Naive thymus-derived CD4-positive, alpha-beta T cell (primary cell): ENCODE measurements at regions of chr4 and their contacts with region 1.

Region 1: DNA sequence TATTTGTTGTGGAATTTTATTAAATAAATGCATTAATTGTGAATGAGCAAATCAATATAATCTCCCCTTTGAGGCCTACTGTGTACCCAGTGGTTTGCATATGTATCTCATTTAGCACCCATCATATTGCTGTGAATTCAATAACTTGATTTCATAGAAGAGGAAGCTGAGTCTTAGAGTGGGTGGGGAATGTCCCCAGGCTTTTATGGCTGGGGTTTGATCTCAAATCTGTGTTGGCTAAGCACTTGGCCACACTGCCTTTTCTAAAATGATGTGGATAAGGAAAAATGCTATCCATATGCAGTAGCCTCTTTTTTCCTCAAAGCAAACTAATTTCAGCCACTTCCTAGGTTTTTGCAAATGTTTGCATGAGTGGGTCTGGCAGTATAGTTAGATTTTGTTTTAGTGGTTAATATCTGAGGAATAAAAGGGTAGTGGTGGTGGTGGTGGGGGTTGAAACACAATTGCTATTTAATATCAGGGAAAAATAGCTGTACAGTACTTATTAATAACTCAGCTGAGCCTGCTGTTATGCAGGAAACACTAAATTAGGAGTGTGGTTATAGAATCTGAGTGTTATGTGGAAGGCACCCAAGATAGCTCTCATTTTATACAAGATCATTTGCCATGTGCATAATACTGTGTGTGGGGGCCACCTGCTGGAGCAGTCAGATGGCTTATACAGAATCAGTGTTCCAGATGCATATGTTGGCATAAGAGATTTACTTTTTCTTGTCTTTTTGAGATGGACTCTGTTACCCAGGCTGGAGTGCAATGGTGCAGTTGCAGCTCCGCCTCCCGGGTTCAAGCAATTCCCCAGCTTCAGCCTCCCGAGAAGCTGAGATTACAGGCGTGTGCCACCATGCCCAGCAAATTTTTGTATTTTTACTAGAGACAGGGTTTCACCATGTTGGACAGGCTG is 108.0 kb downstream of the TMEM131L start:
- DNase-seq: peak; percentile 12 to 77 (median 69)
- ATAC-seq: peak; percentile 94
- H3K4me3 ChIP-seq: no peak overlapping the region
- H3K4me3 Mint-ChIP-seq: peak overlapping the region; percentile 7 to 61 (median 42)
- H3K27ac ChIP-seq: peak overlapping the region; percentile 11
- H3K27ac Mint-ChIP-seq: peak overlapping the region; percentile 30 to 85 (median 83)
- H3K4me1 ChIP-seq: peaks cover 12 to 36% of the 10 kb centered on the region in 2 donors
- H3K4me1 Mint-ChIP-seq: peaks cover 46 to 84% (median 74%) of the 10 kb centered on the region in 7 donors
- H3K27me3 ChIP-seq: no peaks in the 10 kb centered on the region
- H3K27me3 Mint-ChIP-seq: no peaks in the 10 kb centered on the region

Region 2: GRCh38 chr4:153142700-153143438 is 431.3 kb before region 1 on chr4:
- CTCF ChIA-PET with region 1: interaction called, 4 read pairs
- POLR2A ChIA-PET with region 1: no interaction called
- intact Hi-C with region 1: loop called (anchors 1 to 2 kb)
- DNase-seq: peak in 8 of 9 donors; percentile 39 to 71 (median 58)
- ATAC-seq: peak; percentile 76
- H3K4me3 ChIP-seq: no peak overlapping the region
- H3K4me3 Mint-ChIP-seq: no peak overlapping the region
- H3K27ac ChIP-seq: no peak overlapping the region
- H3K27ac Mint-ChIP-seq: no peak overlapping the region
- H3K4me1 ChIP-seq: no peaks in the 10 kb centered on the region
- H3K4me1 Mint-ChIP-seq: peaks cover 0 to 4% (median 0%) of the 10 kb centered on the region in 7 donors
- H3K27me3 ChIP-seq: no peaks in the 10 kb centered on the region
- H3K27me3 Mint-ChIP-seq: peaks cover 0 to 14% (median 0%) of the 10 kb centered on the region in 5 donors

Region 3: DNA sequence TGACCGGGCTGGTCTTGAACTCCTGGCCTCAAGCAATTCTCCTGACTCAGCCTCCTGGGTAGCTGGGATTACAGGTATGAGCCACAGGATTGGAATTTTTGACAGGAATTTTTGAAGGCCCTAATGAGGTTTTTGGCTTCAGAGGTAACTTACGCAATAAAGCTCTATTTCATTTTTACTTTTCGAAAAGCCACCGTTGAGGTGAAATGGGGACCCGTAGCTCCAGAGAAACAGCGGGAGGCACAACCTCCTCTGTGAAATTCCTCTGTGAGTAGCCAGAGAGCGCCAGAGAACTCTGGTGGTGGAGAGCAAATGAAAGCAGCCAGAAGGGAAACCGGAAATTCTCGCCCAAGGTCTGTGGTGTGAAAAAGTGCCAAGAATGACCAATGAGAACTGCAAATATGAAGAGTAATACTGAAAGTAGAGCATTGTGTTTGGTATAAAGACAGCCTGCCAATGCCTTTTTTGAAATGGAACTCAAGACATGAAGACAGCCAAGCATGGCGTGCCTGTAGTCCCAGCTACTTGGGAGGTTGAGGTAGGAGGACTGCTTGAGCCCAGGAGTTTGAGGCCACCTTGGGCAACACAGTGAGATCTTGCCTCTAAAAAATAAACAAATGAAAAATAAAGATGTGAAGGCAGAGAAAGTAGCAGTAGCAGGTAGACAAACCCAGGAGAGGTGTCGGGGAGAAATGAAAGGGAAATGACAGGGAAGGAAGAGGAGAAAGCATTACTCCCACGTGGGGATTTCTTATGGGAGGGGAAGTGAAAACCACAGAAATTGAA is 141.0 kb before region 1 on chr4:
- CTCF ChIA-PET with region 1: interaction called, 58 read pairs
- POLR2A ChIA-PET with region 1: interaction called, 17 read pairs
- intact Hi-C with region 1: loop called (anchors 1 kb)
- DNase-seq: peak; percentile 22 to 72 (median 59)
- ATAC-seq: peak; percentile 90
- H3K4me3 ChIP-seq: peak overlapping the region; percentile 65
- H3K4me3 Mint-ChIP-seq: peak overlapping the region; percentile 78 to 98 (median 87)
- H3K27ac ChIP-seq: peak overlapping the region; percentile 66
- H3K27ac Mint-ChIP-seq: peak overlapping the region; percentile 88 to 98 (median 96)
- H3K4me1 ChIP-seq: peaks cover 13 to 54% of the 10 kb centered on the region in 2 donors
- H3K4me1 Mint-ChIP-seq: peaks cover 31 to 83% (median 72%) of the 10 kb centered on the region in 7 donors
- H3K27me3 ChIP-seq: no peaks in the 10 kb centered on the region
- H3K27me3 Mint-ChIP-seq: no peaks in the 10 kb centered on the region

Region 4: GRCh38 chr4:153488006-153488891 is 85.9 kb before region 1 on chr4:
- CTCF ChIA-PET with region 1: interaction called, 15 read pairs
- POLR2A ChIA-PET with region 1: interaction called, 10 read pairs
- intact Hi-C with region 1: loop called (anchors 1 kb)
- DNase-seq: peak; percentile 51 to 87 (median 79)
- ATAC-seq: peak; percentile 81
- H3K4me3 ChIP-seq: peak overlapping the region; percentile 59
- H3K4me3 Mint-ChIP-seq: peak overlapping the region; percentile 79 to 93 (median 84)
- H3K27ac ChIP-seq: peak overlapping the region; percentile 85
- H3K27ac Mint-ChIP-seq: peak overlapping the region; percentile 87 to 99 (median 95)
- H3K4me1 ChIP-seq: peaks cover 57 to 71% of the 10 kb centered on the region in 2 donors
- H3K4me1 Mint-ChIP-seq: peaks cover 68 to 91% (median 81%) of the 10 kb centered on the region in 7 donors
- H3K27me3 ChIP-seq: no peaks in the 10 kb centered on the region
- H3K27me3 Mint-ChIP-seq: no peaks in the 10 kb centered on the region

Region 5: DNA sequence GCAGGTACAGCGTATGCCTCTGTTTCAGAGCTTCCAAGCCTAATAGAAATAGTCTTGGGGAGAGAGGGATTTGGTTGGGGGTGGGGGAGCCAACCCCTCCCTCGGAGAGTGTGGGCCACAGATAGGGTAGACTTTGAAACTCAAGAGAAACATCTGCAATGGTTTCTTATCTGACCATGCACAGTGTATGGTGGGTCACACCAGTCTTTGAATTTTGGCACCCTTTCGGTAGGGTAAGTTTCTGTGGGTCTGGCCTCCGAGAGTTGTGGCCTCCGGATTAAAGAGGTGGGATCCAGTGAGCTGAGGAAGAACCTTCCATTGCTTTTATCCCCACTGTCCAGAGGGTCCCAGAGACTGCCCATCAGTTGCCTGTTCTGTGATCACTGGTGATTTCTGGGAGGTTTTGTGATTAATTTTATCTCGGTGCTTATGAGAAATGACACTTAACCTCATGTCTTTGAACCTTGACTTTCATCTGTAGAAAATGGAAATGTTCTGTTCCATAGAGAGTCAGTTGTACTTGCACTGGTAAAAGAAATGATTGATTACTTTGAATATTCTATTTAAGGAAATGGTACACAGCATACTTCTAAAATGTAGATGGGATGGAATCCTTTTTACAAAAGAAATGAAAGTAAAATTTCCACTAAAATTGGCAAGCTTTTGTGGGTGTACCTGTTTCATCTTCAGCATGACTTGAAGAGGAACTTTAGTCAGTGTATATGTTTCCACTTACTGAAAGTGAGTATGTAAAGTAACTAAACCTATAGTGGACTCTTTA is 45.2 kb before region 1 on chr4:
- CTCF ChIA-PET with region 1: interaction called, 4 read pairs
- POLR2A ChIA-PET with region 1: interaction called, 4 read pairs
- intact Hi-C with region 1: loop called (anchors 1 to 2 kb)
- DNase-seq: peak in 5 of 9 donors; percentile 21 to 32 (median 27)
- ATAC-seq: peak; percentile 18
- H3K4me3 ChIP-seq: peak overlapping the region; percentile 24
- H3K4me3 Mint-ChIP-seq: peak overlapping the region; percentile 62 to 89 (median 80)
- H3K27ac ChIP-seq: peak overlapping the region; percentile 68
- H3K27ac Mint-ChIP-seq: peak overlapping the region; percentile 86 to 96 (median 90)
- H3K4me1 ChIP-seq: peaks cover 71 to 94% of the 10 kb centered on the region in 2 donors
- H3K4me1 Mint-ChIP-seq: peaks cover 82 to 99% (median 96%) of the 10 kb centered on the region in 7 donors
- H3K27me3 ChIP-seq: no peaks in the 10 kb centered on the region
- H3K27me3 Mint-ChIP-seq: no peaks in the 10 kb centered on the region

Region 6: DNA sequence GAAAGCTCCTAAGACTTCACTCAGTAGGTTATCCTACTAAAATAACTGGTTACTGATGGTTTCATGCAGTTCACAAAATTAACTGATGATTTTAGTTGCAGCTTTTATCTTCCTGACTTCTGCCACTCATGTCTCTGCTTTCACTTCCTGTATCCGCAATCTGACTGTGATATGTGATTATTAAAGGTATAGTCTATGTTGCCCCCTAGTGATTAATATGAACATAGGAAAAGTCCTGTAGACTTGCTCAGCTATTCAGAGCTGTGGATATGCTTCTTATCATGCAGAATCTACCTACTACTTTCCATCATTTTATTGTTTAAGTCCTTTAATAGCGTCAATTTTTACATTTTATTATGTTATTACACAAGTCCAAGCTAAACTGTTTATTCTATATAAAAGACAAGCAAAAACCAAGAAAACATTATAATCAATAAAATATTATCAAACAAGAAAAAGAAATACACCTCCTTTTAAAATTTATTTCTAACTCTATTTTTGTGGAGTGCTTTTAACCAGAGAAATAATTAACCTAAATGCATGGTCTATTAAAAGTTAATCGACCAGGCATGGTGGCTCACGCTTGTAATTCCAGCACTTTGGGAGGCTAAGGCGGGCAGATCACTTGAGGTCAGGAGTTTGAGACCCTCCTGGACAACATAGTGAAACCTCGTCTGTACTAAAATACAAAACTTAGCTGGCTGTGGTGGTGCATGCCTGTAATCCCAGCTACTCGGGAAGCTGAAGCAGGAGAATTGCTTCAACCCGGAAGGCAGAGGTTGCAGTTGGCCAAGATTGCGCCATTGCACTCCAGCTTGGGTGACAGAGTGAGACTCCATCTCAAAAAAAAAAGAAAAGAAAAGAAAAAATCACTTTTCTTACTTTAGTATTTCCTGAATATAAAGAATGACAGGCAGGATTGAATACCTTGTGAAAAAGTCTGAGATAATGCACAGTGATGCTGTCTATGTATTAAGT is 69.6 kb after region 1 on chr4:
- CTCF ChIA-PET with region 1: interaction called, 6 read pairs
- POLR2A ChIA-PET with region 1: no interaction called
- intact Hi-C with region 1: loop called in 1 of 2 experiments (anchors 2 kb)
- DNase-seq: peak in 7 of 9 donors; percentile 25 to 73 (median 56)
- ATAC-seq: peak; percentile 91
- H3K4me3 ChIP-seq: no peak overlapping the region
- H3K4me3 Mint-ChIP-seq: peak overlapping the region in 6 of 10 donors; percentile 0 to 46 (median 22)
- H3K27ac ChIP-seq: no peak overlapping the region
- H3K27ac Mint-ChIP-seq: peak overlapping the region in 7 of 9 donors; percentile 0 to 69 (median 8)
- H3K4me1 ChIP-seq: no peaks in the 10 kb centered on the region
- H3K4me1 Mint-ChIP-seq: peaks cover 4 to 22% (median 18%) of the 10 kb centered on the region in 7 donors
- H3K27me3 ChIP-seq: no peaks in the 10 kb centered on the region
- H3K27me3 Mint-ChIP-seq: no peaks in the 10 kb centered on the region

Region 7: DNA sequence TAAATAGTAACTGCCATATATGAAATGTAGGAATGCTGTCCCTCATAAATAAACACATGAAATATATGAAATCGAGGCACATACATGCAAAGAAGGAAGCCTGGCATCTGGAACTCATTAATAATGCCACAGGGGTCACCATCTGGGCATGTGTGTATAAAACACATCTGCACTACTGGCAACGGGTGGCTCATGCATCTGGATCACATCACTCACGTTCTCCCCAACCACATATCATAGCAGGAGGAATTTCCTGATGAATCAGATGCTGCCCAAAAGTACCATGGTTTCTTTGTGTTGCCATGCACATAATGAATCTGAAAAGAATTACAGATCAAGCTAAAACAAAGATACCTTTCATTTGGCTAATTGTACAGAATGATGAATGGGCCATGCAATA is 157.1 kb after region 1 on chr4:
- CTCF ChIA-PET with region 1: no interaction called
- POLR2A ChIA-PET with region 1: no interaction called
- intact Hi-C with region 1: no loop called
- DNase-seq: no peak
- ATAC-seq: no peak
- H3K4me3 ChIP-seq: no peak overlapping the region
- H3K4me3 Mint-ChIP-seq: no peak overlapping the region
- H3K27ac ChIP-seq: no peak overlapping the region
- H3K27ac Mint-ChIP-seq: peak overlapping the region in 1 of 9 donors; percentile 11
- H3K4me1 ChIP-seq: no peaks in the 10 kb centered on the region
- H3K4me1 Mint-ChIP-seq: peaks cover 0 to 7% (median 0%) of the 10 kb centered on the region in 7 donors
- H3K27me3 ChIP-seq: no peaks in the 10 kb centered on the region
- H3K27me3 Mint-ChIP-seq: peaks cover 0 to 37% (median 0%) of the 10 kb centered on the region in 5 donors

Region 8: GRCh38 chr4:153997516-153997915 is 423.4 kb after region 1 on chr4:
- CTCF ChIA-PET with region 1: no interaction called
- POLR2A ChIA-PET with region 1: no interaction called
- intact Hi-C with region 1: no loop called
- DNase-seq: no peak
- ATAC-seq: no peak
- H3K4me3 ChIP-seq: no peak overlapping the region
- H3K4me3 Mint-ChIP-seq: no peak overlapping the region
- H3K27ac ChIP-seq: no peak overlapping the region
- H3K27ac Mint-ChIP-seq: no peak overlapping the region
- H3K4me1 ChIP-seq: no peaks in the 10 kb centered on the region
- H3K4me1 Mint-ChIP-seq: no peaks in the 10 kb centered on the region
- H3K27me3 ChIP-seq: no peaks in the 10 kb centered on the region
- H3K27me3 Mint-ChIP-seq: peaks cover 0 to 49% (median 18%) of the 10 kb centered on the region in 5 donors

Region 9: GRCh38 chr4:154478128-154478527 is 904.0 kb after region 1 on chr4:
- CTCF ChIA-PET with region 1: no interaction called
- POLR2A ChIA-PET with region 1: no interaction called
- intact Hi-C with region 1: no loop called
- DNase-seq: no peak
- ATAC-seq: no peak
- H3K4me3 ChIP-seq: no peak overlapping the region
- H3K4me3 Mint-ChIP-seq: no peak overlapping the region
- H3K27ac ChIP-seq: no peak overlapping the region
- H3K27ac Mint-ChIP-seq: no peak overlapping the region
- H3K4me1 ChIP-seq: no peaks in the 10 kb centered on the region
- H3K4me1 Mint-ChIP-seq: no peaks in the 10 kb centered on the region
- H3K27me3 ChIP-seq: no peaks in the 10 kb centered on the region
- H3K27me3 Mint-ChIP-seq: peaks cover 10 to 22% (median 20%) of the 10 kb centered on the region in 5 donors

Region 10: DNA sequence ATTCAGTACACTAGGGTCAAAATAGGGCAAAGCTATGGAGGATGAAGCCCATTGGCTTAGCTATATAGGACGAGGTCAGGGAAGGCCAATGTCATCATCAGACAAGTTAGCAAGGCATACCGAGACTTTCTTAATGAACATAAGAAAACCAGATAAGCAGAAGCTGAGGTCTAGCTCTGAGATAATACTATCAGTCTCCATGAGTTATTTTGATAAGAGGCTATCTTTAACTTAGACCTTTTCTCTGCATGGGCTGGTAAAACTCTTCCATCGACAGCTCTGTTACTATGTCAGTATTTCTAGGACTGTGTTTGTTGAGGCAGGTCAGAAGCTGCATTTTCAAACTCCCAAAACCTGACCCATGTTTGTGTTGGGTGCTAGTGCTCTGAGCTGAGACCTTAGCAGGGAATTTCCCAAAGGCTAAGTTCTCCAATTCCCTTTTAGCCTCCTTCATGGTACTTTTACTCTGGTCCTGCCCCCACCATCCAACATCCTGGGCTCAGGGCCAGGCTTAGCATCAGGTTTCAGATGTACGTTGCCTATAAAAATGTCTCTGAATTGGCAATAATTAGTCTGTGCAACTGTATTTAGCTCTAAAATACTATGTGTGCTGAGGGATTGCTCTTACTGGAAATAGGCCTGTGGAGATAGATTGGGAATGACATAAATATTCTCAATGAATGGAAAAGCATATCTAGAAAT is 1140.3 kb after region 1 on chr4:
- CTCF ChIA-PET with region 1: no interaction called
- POLR2A ChIA-PET with region 1: no interaction called
- intact Hi-C with region 1: no loop called
- DNase-seq: no peak
- ATAC-seq: no peak
- H3K4me3 ChIP-seq: no peak overlapping the region
- H3K4me3 Mint-ChIP-seq: no peak overlapping the region
- H3K27ac ChIP-seq: no peak overlapping the region
- H3K27ac Mint-ChIP-seq: no peak overlapping the region
- H3K4me1 ChIP-seq: no peaks in the 10 kb centered on the region
- H3K4me1 Mint-ChIP-seq: peaks cover 0 to 8% (median 0%) of the 10 kb centered on the region in 7 donors
- H3K27me3 ChIP-seq: no peaks in the 10 kb centered on the region
- H3K27me3 Mint-ChIP-seq: peaks cover 0 to 35% (median 25%) of the 10 kb centered on the region in 5 donors